ENCODE measurements at regions of chr3 and their contacts with region 1.

Region 1: DNA sequence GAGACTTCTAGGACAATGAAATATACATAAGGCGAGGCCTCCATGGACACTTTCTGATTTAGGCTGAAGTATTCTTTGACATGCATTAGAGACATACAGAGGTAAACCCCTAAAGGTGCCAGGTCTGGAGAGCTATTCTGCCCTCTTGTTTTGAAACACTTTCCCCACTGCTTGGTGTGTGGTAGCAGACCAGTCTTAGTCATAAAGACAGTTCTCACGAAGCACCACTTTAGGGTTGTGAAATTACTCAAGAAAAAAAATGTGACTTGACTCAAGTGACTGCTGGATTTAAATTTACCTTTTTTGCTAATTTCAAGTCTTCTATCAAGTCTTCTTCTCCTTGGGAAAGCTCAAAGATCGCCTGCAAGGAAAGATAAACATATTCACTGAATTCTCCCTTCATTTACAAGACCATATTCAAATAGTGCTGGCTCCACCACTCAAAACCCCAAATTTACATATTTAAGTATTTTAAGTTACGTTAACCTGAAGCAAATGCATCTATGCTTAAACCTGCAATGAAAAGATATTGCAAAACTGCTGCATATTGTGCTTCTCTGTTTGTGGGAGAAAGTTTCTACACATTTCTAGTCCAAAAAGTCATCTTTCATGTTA is 48.4 kb downstream of the ARHGEF3 start:
- DNase-seq: peak; percentile 41
- ATAC-seq: peak; percentile 78 to 94 (median 87)
- H3K4me3 ChIP-seq: no peak overlapping the region
- H3K4me3 Mint-ChIP-seq: peak overlapping the region; percentile 99
- H3K27ac ChIP-seq: peak overlapping the region; percentile 89
- H3K27ac Mint-ChIP-seq: peak overlapping the region; percentile 99 to 100
- H3K4me1 ChIP-seq: peaks cover 67% of the 10 kb centered on the region
- H3K4me1 Mint-ChIP-seq: peaks cover 69 to 80% of the 10 kb centered on the region in 2 donors
- H3K27me3 ChIP-seq: no peaks in the 10 kb centered on the region
- H3K27me3 Mint-ChIP-seq: no peaks in the 10 kb centered on the region
- CTCF ChIP-seq: no peak

Region 2: GRCh38 chr3:56737006-56737405 is 16.3 kb before region 1 on chr3:
- intact Hi-C with region 1: loop called (anchors 1 kb)
- DNase-seq: no peak
- ATAC-seq: no peak
- H3K4me3 ChIP-seq: no peak overlapping the region
- H3K4me3 Mint-ChIP-seq: no peak overlapping the region
- H3K27ac ChIP-seq: no peak overlapping the region
- H3K27ac Mint-ChIP-seq: peak overlapping the region; percentile 89 to 94
- H3K4me1 ChIP-seq: peaks cover 24% of the 10 kb centered on the region
- H3K4me1 Mint-ChIP-seq: peaks cover 36 to 46% of the 10 kb centered on the region in 2 donors
- H3K27me3 ChIP-seq: no peaks in the 10 kb centered on the region
- H3K27me3 Mint-ChIP-seq: no peaks in the 10 kb centered on the region
- CTCF ChIP-seq: no peak

Region 3: DNA sequence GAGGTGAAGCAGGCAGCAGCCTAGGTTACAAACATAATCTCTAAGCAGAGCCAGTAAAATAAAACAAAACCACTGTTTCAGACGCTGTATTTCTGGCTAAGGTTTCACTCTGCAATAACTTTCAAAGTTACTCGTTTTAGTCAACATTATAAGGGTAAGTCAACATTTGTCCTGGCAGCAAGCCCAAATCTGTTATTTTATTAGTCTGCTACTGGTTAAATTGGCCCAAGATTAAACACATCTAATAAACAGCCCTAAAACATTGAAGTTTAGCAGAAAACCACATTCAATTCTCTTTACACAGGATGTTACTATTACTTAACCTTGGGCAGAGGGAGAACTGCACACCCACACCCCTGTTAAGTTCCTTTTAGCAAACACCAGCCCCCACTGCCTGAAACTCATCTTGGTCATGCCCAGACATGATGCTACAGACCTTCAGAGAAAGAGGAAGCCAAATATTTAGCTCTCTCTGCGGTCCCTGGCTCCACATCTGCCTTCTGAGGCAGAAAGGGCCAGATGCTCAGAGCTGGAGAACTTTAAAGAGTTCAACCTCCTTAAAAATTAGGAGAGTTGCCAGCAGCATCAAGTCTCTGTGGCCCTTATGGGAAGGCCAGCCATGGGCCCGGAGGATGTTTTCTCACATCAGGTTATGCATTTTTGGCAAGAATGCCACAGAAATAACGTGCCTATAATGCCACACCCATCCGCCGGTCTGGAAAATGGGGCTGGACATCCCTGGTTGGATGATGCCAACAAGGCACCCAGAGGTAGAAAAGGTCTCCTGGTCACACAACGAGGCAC is 30.5 kb after region 1 on chr3:
- intact Hi-C with region 1: loop called (anchors 1 kb)
- DNase-seq: peak; percentile 62 to 85
- ATAC-seq: peak; percentile 84 to 95 (median 94)
- H3K4me3 ChIP-seq: peak overlapping the region; percentile 2
- H3K4me3 Mint-ChIP-seq: peak overlapping the region; percentile 86
- H3K27ac ChIP-seq: peak overlapping the region; percentile 86
- H3K27ac Mint-ChIP-seq: peak overlapping the region; percentile 85 to 92
- H3K4me1 ChIP-seq: peaks cover 87% of the 10 kb centered on the region
- H3K4me1 Mint-ChIP-seq: peaks cover 95 to 97% of the 10 kb centered on the region in 2 donors
- H3K27me3 ChIP-seq: no peaks in the 10 kb centered on the region
- H3K27me3 Mint-ChIP-seq: no peaks in the 10 kb centered on the region
- CTCF ChIP-seq: no peak

Region 4: GRCh38 chr3:56796202-56796601 is 42.9 kb after region 1 on chr3:
- intact Hi-C with region 1: loop called (anchors 1 kb)
- DNase-seq: peak in 1 of 2 donors; percentile 47
- ATAC-seq: peak; percentile 36 to 48 (median 43)
- H3K4me3 ChIP-seq: no peak overlapping the region
- H3K4me3 Mint-ChIP-seq: peak overlapping the region; percentile 90
- H3K27ac ChIP-seq: peak overlapping the region; percentile 65
- H3K27ac Mint-ChIP-seq: peak overlapping the region; percentile 92
- H3K4me1 ChIP-seq: peaks cover 67% of the 10 kb centered on the region
- H3K4me1 Mint-ChIP-seq: peaks cover 77 to 86% of the 10 kb centered on the region in 2 donors
- H3K27me3 ChIP-seq: no peaks in the 10 kb centered on the region
- H3K27me3 Mint-ChIP-seq: no peaks in the 10 kb centered on the region
- CTCF ChIP-seq: no peak

Measured in natural killer cell (primary cell).